ENCODE measurements at regions of chr5 and their contacts with region 1.

Region 1: GRCh38 chr5:61167382-61167781 is 5.1 kb upstream of the SMIM15 start:
- DNase-seq: no peak
- ATAC-seq: no peak
- H3K4me3 ChIP-seq: no peak overlapping the region
- H3K27ac ChIP-seq: no peak overlapping the region
- H3K4me1 ChIP-seq: peaks cover 0 to 11% (median 5%) of the 10 kb centered on the region in 9 donors
- H3K27me3 ChIP-seq: no peaks in the 10 kb centered on the region
- CTCF ChIP-seq: peak in 7 of 9 donors; percentile 31 to 57 (median 41)

Region 2: DNA sequence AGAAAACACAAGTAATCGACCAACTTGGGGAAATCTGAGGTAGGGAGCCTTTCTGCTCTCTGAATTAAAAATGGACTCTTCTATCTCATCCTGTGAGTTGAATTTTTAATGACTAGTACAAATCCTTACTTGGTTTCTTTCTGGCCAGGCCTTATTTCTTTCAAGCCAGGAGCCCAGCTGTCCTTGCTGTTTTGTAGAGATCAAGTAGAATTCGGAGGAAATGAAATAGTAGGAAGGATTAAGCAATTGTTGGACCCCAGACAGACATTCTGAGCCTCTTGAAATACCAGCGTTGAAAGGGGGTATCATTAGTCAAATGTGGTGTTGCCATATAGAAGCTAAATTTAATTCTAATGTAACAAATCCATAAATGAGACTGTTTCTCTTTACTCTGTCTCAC is 48.6 kb after region 1 on chr5:
- intact Hi-C with region 1: loop called in 1 of 10 experiments (anchors 1 kb)
- DNase-seq: no peak
- ATAC-seq: no peak
- H3K4me3 ChIP-seq: no peak overlapping the region
- H3K27ac ChIP-seq: no peak overlapping the region
- H3K4me1 ChIP-seq: peaks cover 0 to 12% (median 0%) of the 10 kb centered on the region in 9 donors
- H3K27me3 ChIP-seq: no peaks in the 10 kb centered on the region
- CTCF ChIP-seq: no peak

Region 3: DNA sequence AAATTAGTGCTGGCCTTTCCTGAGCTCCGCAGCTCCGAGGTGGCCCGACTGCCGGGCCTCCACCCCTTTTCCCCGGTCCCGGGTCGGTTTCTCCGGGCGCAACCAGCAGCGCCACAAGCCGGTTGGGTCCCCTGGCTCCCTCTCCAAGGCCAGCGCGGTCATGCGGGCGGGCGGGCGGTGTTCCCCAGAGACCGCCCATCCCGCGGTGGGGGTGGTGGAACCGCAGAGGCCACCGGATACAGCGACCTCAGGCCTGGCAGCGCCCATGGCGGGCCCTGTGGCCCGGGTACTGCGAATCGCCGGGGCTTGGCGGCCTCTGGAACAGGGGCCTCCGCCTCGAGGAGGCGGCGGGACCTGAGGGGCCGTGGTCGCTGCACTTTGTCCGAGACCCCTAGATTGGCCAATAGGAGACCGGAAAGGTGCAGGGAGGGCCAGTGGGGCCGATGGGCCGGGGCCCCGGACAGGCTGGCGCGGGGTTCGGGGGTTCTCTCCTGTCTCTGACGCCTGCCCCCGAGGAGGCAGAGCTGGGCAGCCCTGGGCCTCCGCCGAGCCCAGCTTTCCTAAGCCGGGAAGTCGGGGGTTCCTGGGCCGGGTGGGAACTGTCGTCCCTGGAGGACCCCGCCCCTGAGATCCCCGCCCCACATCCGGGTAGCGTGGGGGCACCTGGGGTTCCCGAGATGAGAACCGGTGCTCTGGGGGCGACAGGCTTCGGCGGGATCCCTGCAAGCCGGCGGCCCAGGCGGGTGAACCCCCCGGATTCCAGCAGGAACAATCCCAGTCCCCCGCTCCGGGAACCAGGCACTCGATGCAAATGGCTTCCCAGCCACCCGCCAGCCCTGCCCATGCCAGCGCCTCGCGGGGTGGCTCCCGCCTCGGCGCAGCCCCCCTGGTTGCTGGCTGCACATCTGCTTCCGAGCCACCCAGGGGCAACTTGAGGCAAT is 458.6 kb after region 1 on chr5:
- intact Hi-C with region 1: no loop called
- DNase-seq: peak; percentile 82 to 84
- ATAC-seq: peak; percentile 93 to 99 (median 97)
- H3K4me3 ChIP-seq: peak overlapping the region; percentile 44 to 73 (median 64)
- H3K27ac ChIP-seq: peak overlapping the region; percentile 73 to 97 (median 90)
- H3K4me1 ChIP-seq: peaks cover 4 to 28% (median 19%) of the 10 kb centered on the region in 9 donors
- H3K27me3 ChIP-seq: peaks cover 0 to 19% (median 0%) of the 10 kb centered on the region in 7 donors
- CTCF ChIP-seq: peak in 2 of 9 donors; percentile 19 to 20

Region 4: DNA sequence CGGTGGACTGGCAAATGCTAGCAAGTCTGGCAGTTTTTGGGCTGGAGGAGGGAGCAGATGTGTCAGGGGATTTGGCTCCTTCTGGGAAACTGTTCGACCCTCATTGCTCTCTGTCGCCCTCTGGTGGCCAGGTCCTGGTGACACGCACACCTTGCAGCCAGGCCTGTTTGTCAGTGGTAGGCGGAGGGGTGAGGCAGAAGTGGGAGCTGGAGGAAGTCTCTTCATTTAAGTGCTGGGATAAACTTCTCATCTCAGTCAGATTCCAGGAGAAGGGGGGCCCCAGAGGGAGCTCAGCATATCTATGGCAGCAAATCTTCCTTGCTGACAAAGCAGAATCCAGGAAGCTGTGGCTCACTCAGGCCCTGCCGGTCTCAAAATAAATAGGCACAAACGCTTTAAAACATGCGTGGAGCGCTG is 491.2 kb after region 1 on chr5:
- intact Hi-C with region 1: loop called in 8 of 10 experiments (anchors 5 to 10 kb)
- DNase-seq: peak; percentile 88
- ATAC-seq: peak; percentile 82 to 95 (median 92)
- H3K4me3 ChIP-seq: peak overlapping the region in 6 of 10 donors; percentile 1 to 35 (median 27)
- H3K27ac ChIP-seq: peak overlapping the region in 6 of 10 donors; percentile 25 to 62 (median 40)
- H3K4me1 ChIP-seq: peaks cover 0 to 8% (median 0%) of the 10 kb centered on the region in 9 donors
- H3K27me3 ChIP-seq: no peaks in the 10 kb centered on the region
- CTCF ChIP-seq: peak; percentile 88 to 97 (median 93)

Measured in heart right ventricle (tissue), 16 donors.